ENCODE measurements at regions of chr9 and their contacts with region 1.

Region 1: DNA sequence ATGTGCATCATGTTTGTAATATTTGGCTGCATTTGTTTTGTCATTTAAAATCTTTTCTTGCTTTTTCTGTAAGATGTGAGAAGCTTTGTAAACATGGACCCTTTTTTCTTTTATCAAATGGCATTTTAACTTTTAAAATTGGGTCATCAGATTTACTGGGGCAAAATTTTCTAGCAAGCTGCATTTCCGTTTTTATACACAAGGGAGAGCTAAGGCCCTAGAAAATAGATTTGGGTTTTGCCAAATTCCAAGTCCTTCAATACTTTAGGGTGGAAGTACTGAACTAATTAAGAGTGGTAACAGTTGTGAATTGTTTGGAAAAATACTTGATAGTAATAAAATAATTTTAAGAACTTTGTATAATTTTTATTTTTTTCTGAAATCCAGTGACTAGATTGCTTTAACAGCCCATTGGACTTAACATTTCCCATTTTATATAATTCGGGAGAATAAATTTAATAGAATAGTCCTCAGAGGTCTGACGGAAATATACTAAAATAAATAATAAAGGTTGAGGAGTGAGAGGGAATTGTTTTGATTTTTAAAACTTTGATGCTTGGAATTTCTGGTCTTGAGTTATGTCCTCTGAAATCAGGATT is 117.4 kb downstream of the SMARCA2 start:
- DNase-seq: no peak
- H3K4me3 ChIP-seq: no peak overlapping the region
- H3K27ac ChIP-seq: peak overlapping the region in 1 of 2 donors; percentile 9
- H3K4me1 ChIP-seq: peaks cover 0 to 50% (median 30%) of the 10 kb centered on the region in 4 donors
- H3K27me3 ChIP-seq: no peaks in the 10 kb centered on the region
- CTCF ChIP-seq: peak; percentile 73 to 79

Region 2: GRCh38 chr9:2024888-2025782 is 107.4 kb before region 1 on chr9:
- intact Hi-C with region 1: no loop called
- DNase-seq: no peak
- H3K4me3 ChIP-seq: peak overlapping the region in 1 of 2 donors; percentile 17
- H3K27ac ChIP-seq: peak overlapping the region; percentile 43 to 67
- H3K4me1 ChIP-seq: peaks cover 0 to 97% (median 60%) of the 10 kb centered on the region in 4 donors
- H3K27me3 ChIP-seq: no peaks in the 10 kb centered on the region
- CTCF ChIP-seq: no peak

Region 3: GRCh38 chr9:2181792-2182191 is 49.2 kb after region 1 on chr9:
- intact Hi-C with region 1: loop called (anchors 10 kb)
- DNase-seq: no peak
- H3K4me3 ChIP-seq: no peak overlapping the region
- H3K27ac ChIP-seq: no peak overlapping the region
- H3K4me1 ChIP-seq: no peaks in the 10 kb centered on the region
- H3K27me3 ChIP-seq: no peaks in the 10 kb centered on the region
- CTCF ChIP-seq: peak; percentile 35 to 41

Region 4: GRCh38 chr9:2241836-2242741 is 109.5 kb after region 1 on chr9:
- intact Hi-C with region 1: loop called (anchors 10 kb)
- DNase-seq: peak; percentile 72 to 84
- H3K4me3 ChIP-seq: peak overlapping the region; percentile 50 to 58
- H3K27ac ChIP-seq: peak overlapping the region; percentile 42
- H3K4me1 ChIP-seq: peaks cover 0 to 20% (median 13%) of the 10 kb centered on the region in 4 donors
- H3K27me3 ChIP-seq: no peaks in the 10 kb centered on the region
- CTCF ChIP-seq: no peak

Region 5: GRCh38 chr9:2727966-2728613 is 595.5 kb after region 1 on chr9:
- intact Hi-C with region 1: loop called (anchors 10 kb)
- DNase-seq: no peak
- H3K4me3 ChIP-seq: no peak overlapping the region
- H3K27ac ChIP-seq: no peak overlapping the region
- H3K4me1 ChIP-seq: peaks cover 0 to 39% (median 4%) of the 10 kb centered on the region in 4 donors
- H3K27me3 ChIP-seq: no peaks in the 10 kb centered on the region
- CTCF ChIP-seq: peak; percentile 48 to 51

Region 6: DNA sequence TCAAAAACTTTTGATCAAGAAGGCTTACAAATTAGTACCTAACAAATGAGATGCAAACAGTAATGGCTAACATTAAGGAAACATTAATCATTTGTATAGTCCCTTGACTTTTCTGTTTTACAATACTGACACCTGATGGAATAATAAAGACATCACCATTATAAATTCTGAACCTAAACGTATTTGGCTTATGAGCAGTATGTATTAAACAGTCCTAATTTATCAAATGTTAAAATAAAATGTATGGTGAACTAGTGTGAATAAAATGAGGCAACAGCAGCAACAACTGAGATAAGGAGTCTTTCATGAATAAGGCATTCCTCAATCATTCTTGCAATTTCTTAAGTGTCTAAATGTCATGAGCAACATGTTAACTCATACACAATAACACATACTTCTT is 705.3 kb after region 1 on chr9:
- intact Hi-C with region 1: loop called (anchors 5 kb)
- DNase-seq: no peak
- H3K4me3 ChIP-seq: peak overlapping the region; percentile 12 to 18
- H3K27ac ChIP-seq: peak overlapping the region; percentile 40 to 52
- H3K4me1 ChIP-seq: peaks cover 0 to 51% (median 21%) of the 10 kb centered on the region in 4 donors
- H3K27me3 ChIP-seq: no peaks in the 10 kb centered on the region
- CTCF ChIP-seq: peak; percentile 33 to 42